ENCODE measurements at regions of chr19 and their contacts with region 1.

Region 1: GRCh38 chr19:57279418-57280066 is 743 bp upstream of the ZNF460 start:
- DNase-seq: peak; percentile 91 to 93
- H3K4me3 ChIP-seq: peak overlapping the region in 2 of 3 donors; percentile 55 to 91
- H3K27ac ChIP-seq: peak overlapping the region; percentile 96 to 99 (median 97)
- H3K4me1 ChIP-seq: peaks cover 11 to 25% of the 10 kb centered on the region in 2 donors
- H3K27me3 ChIP-seq: no peaks in the 10 kb centered on the region
- CTCF ChIP-seq: peak in 1 of 6 experiments; percentile 34
- POLR2A ChIP-seq: peak in 1 of 2 donors; percentile 66

Region 2: DNA sequence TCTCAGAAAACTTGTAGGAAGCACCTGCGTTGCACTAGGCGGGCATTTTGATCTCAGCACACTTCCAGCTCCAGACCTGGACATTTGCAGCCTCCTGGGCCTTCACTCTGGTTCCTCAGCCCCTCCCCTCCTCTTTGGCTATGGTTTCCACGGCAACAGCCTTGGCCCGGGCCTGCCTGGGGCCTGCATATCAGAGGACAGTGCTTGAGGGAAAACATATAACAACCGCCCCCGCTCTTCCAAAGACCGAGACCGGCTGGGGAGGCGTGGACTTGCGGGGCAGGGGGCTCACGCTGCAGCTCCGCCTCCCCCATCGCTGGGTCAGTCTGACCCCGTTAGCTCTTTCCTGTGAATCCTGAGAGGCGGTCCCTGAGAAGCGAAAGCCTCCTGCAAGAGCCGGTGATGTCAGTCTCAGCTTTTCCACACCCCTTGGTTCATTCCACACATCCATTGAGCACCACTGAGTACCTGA is 313.3 kb before region 1 on chr19:
- intact Hi-C with region 1: no loop called
- DNase-seq: no peak
- H3K4me3 ChIP-seq: no peak overlapping the region
- H3K27ac ChIP-seq: no peak overlapping the region
- H3K4me1 ChIP-seq: no peaks in the 10 kb centered on the region
- H3K27me3 ChIP-seq: no peaks in the 10 kb centered on the region
- CTCF ChIP-seq: no peak
- POLR2A ChIP-seq: no peak

Region 3: DNA sequence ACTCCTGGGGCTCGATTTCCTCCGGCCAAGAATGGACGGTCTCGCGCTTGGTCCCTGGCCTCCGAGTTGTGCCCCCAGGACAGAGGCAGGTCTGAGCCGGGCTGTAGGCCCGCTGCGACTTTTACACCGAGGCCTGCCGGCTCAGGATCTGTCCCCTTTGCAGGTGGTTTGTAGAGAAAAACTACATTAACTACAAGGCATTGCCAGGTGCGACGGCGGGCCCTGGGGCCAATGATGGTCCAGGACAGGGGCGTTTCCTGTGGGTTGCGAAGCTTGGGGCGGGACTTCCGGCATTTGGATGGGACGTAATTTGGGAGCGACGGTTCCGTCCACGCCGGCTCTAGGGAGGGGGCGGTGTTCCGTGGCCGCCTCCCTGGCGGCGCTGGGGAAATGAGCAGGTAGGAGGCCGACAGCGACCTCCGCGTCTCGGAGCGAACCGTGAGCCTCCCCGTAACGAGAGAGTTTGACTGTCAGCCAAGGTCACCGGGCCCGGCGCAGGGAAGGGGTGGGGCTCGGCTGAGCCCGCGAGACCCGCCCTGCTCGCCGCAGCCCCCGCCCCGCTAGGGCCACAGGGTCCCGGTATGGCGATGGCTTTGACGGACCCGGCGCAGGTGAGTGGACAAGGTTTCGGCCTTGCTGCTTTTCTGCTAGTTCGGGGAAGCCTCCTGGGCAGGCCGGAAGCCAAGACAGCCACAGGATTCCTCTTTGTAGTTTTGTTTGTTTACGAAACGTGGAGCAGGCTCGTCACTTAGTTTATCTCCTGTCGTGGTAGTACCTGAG is 39.0 kb before region 1 on chr19 and contains the start of gene ZNF805:
- intact Hi-C with region 1: no loop called
- DNase-seq: peak; percentile 97 to 98
- H3K4me3 ChIP-seq: peak within 1 kb of the TSS; percentile 77 to 98 (median 94)
- H3K27ac ChIP-seq: peak within 1 kb of the TSS; percentile 84 to 85 (median 84)
- H3K4me1 ChIP-seq: peaks cover 11 to 14% of the 10 kb centered on the region in 2 donors
- H3K27me3 ChIP-seq: no peaks in the 10 kb centered on the region
- CTCF ChIP-seq: peak in 3 of 6 experiments; percentile 5 to 22 (median 11)
- POLR2A ChIP-seq: peak in 1 of 2 donors; percentile 68
- total RNA-seq, gene ZNF805: 16.3 to 27.5 (median 21.0) TPM

Region 4: DNA sequence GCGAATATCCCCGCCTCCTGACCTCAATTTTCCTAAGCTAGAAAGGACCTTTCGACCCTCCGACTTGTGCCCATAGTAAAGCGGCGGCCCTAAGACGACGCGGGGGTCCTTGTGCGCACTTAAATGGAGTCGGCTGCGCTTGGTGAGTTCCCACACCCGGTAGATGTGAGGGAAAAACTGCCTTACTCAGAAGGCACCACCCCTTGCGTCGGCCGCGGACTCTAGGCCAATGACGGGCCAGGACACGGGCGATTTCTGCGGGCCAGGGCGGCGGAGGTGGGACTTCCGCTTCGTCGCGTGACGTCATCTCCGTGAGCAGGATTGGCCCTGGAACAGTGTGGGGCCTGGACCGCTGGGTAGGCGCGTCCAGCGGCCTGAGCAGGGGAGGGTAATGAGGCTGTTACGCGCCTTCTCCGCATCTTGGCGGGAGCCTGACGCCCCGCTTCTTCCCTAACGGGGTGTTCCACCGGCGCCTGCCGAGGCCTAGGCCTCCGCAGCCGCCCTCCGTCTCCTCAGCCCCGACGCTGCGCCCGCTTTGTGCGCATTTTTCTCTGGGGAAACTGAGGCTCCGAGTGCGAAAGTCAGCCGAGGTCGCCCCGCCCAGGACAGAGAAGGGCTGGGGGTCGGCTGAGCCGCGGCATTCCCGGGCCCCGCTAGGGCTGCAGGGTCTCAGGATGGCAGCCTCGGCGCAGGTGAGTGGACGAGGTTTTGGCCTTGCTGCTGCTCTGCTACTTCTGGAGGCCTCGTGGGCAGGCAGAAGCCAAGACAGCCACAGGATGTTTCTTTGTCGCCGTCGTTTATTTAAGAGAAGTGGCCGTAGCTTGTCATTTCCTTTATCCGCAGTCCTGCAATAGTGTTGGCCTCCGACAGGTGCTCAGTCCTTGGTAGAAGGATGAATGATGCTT is 40.9 kb after region 1 on chr19 and contains the start of gene ZNF543:
- intact Hi-C with region 1: no loop called
- DNase-seq: peak; percentile 96 to 97
- H3K4me3 ChIP-seq: peak within 1 kb of the TSS; percentile 86 to 100 (median 86)
- H3K27ac ChIP-seq: peak within 1 kb of the TSS; percentile 80 to 84 (median 84)
- H3K4me1 ChIP-seq: peaks cover 12 to 15% of the 10 kb centered on the region in 2 donors
- H3K27me3 ChIP-seq: no peaks in the 10 kb centered on the region
- CTCF ChIP-seq: no peak
- POLR2A ChIP-seq: peak in 1 of 2 donors; percentile 85
- total RNA-seq, gene ZNF543: 10.6 to 17.2 (median 14.7) TPM

Region 5: DNA sequence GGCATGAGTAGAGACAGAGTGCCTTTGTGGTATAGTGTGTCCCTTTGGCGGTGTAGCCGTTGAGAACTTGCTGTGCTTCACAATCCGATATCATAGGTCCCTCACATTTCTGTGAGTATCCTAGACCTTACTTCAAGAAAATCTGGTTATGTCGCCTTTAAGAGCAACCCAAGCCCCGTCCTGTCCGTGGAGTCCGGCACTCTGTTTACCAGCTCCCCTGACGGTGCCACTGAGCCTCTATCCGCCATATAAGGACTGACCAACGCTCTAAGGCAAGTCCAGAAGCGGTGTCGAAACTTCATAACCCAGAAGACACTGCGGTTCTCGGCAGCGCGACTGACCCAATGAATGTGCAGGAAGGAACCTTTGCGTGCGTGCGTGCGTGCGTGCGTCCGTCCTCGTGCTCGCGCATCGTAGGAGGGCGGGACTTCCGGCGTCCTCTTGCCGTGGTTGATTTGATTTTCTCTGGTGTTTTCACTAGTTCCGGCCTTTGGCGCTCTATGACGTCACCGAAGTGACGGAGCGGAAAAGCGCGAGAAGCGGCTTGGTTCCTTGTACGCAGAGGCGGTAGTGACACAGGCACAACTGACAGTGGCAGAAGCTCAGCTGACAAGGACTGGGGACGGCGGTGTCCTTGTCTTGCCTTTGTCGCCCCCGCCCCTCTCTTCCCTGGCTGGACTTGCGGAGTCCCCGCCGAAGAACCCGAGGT is 83.6 kb after region 1 on chr19 and contains the starts of genes TRAPPC2B and ZNF547:
- intact Hi-C with region 1: loop called (anchors 10 kb)
- DNase-seq: peak; percentile 100
- H3K4me3 ChIP-seq: peak within 1 kb of the TSS; percentile 44 to 85 (median 77)
- H3K27ac ChIP-seq: peak within 1 kb of the TSS; percentile 71 to 95 (median 90)
- H3K4me1 ChIP-seq: peaks cover 12 to 14% of the 10 kb centered on the region in 2 donors
- H3K27me3 ChIP-seq: no peaks in the 10 kb centered on the region
- CTCF ChIP-seq: no peak
- POLR2A ChIP-seq: peak in 1 of 2 donors; percentile 73
- total RNA-seq, gene TRAPPC2B: 8.7 to 38.3 (median 23.0) TPM
- total RNA-seq, gene ZNF547: 2.5 to 7.0 (median 4.6) TPM

Region 6: DNA sequence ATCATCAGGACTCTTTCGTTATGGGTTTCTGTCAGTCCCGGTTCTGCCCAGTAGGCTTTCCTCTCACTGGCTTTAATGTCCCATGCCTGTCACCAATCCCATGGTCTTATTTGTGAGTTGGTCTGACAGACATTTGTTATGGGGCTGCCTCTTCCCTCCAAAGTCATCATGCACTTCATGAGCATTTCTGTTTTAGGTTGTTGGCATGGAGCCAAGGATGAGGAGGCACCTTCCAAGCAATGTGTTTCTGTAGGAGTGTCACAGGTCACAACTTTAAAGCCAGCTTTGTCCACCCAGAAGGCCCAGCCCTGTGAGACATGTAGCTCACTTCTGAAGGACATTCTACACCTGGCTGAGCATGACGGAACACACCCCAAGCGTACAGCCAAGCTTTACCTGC is 139.9 kb after region 1 on chr19:
- intact Hi-C with region 1: no loop called
- DNase-seq: no peak
- H3K4me3 ChIP-seq: no peak overlapping the region
- H3K27ac ChIP-seq: no peak overlapping the region
- H3K4me1 ChIP-seq: no peaks in the 10 kb centered on the region
- H3K27me3 ChIP-seq: no peaks in the 10 kb centered on the region
- CTCF ChIP-seq: no peak
- POLR2A ChIP-seq: no peak